ENCODE measurements at regions of chr17 and their contacts with region 1.

Region 1: DNA sequence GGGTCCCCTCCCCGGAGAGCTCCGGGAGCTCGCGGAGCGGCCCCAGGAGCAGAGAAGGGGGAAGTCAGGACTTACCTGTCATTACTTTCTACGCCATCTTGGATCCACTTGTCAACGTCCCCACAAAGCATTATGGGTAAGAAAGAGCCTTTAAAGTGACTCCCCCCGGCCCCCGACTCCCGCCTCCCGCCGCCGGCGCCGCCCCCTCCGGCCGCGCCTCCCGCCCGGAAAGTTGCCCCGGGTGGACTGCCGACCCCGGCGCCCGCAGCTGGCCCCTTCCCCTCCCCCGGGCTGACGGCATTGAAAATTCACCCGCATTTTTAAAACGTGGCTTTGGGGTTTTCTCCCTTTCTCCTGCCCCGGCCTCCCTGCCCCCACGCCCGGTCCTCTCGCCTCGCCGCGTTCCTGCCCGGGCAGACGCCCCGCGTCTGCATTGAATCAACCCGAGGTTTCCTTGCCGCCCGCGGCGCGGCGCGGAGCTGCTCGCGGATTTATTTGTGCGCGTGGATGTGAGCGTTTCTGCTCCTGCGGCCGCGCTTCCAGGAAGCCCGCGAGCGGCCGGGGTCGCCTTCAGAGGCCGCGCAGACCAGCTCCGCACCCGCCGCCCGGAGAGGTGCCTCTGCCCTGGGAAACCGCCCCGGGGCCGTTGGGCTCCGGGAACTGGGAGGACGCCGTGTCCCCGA is at the start of gene HELZ:
- DNase-seq: peak; percentile 48 to 89 (median 64)
- ATAC-seq: peak; percentile 73
- H3K4me3 ChIP-seq: peak within 1 kb of the TSS; percentile 94
- H3K4me3 Mint-ChIP-seq: peak within 1 kb of the TSS; percentile 97
- H3K27ac ChIP-seq: peak within 1 kb of the TSS; percentile 62 to 74
- H3K27ac Mint-ChIP-seq: peak within 1 kb of the TSS; percentile 89
- H3K4me1 ChIP-seq: peaks cover 36% of the 10 kb centered on the region
- H3K4me1 Mint-ChIP-seq: peaks cover 48% of the 10 kb centered on the region
- H3K27me3 ChIP-seq: no peaks in the 10 kb centered on the region
- H3K27me3 Mint-ChIP-seq: no peaks in the 10 kb centered on the region
- CTCF ChIP-seq: no peak
- total RNA-seq, gene HELZ: 94.8 to 107 TPM

Region 2: DNA sequence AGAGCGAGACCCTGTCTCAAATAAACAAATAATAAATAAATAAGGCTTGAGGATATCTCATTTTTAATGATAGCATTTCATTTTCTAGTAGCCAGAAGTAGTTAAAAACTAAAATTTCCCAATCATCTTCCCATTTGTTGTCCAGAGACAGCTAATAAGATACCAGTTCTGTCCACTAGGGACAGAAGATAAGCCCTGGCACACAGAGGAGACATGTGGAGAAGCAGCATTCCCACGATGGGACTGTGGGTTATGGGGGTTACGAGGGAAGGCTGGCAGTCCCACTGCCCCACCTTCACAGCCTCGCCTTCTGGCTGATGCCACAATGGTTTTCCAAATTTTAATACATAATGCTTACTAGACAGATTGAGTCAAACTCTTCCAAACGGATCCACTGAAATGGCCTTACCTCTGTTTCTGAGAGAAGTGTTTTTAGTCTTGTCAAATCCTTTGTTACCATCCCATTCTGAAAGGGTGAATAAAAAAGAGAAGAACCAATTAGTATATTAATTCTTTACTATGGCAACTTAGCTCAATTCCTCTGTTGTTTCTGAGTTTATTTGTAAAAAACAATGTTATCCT is 44.4 kb before region 1 on chr17:
- CTCF ChIA-PET with region 1: no interaction called
- POLR2A ChIA-PET with region 1: no interaction called
- intact Hi-C with region 1: no loop called
- DNase-seq: no peak
- ATAC-seq: no peak
- H3K4me3 ChIP-seq: no peak overlapping the region
- H3K4me3 Mint-ChIP-seq: no peak overlapping the region
- H3K27ac ChIP-seq: no peak overlapping the region
- H3K27ac Mint-ChIP-seq: no peak overlapping the region
- H3K4me1 ChIP-seq: no peaks in the 10 kb centered on the region
- H3K4me1 Mint-ChIP-seq: peaks cover 22% of the 10 kb centered on the region
- H3K27me3 ChIP-seq: no peaks in the 10 kb centered on the region
- H3K27me3 Mint-ChIP-seq: no peaks in the 10 kb centered on the region
- CTCF ChIP-seq: peak; percentile 33

Region 3: DNA sequence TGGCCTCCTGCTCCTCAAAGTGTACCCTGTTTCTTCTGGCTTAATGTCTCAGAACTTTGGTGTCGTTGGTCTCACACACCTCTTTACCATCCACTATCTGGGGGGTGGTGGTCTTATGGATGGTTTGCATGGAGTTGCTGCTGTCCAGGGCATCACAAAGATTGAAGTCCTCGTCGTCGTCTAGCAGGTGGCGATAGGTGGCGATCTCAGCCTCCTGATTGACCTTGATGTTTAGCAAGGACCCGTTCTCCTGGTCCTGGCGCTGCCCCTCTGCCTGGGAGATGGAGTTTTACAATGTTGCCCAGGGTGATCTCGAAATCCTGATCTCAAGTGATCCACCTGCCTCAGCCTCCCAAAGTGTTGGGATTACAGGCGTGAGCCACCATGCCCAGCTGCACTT is 30.9 kb after region 1 on chr17:
- CTCF ChIA-PET with region 1: no interaction called
- POLR2A ChIA-PET with region 1: no interaction called
- intact Hi-C with region 1: no loop called
- DNase-seq: no peak
- ATAC-seq: no peak
- H3K4me3 ChIP-seq: no peak overlapping the region
- H3K4me3 Mint-ChIP-seq: no peak overlapping the region
- H3K27ac ChIP-seq: no peak overlapping the region
- H3K27ac Mint-ChIP-seq: no peak overlapping the region
- H3K4me1 ChIP-seq: no peaks in the 10 kb centered on the region
- H3K4me1 Mint-ChIP-seq: no peaks in the 10 kb centered on the region
- H3K27me3 ChIP-seq: no peaks in the 10 kb centered on the region
- H3K27me3 Mint-ChIP-seq: no peaks in the 10 kb centered on the region
- CTCF ChIP-seq: no peak

Region 4: GRCh38 chr17:67359960-67360773 is 115.0 kb after region 1 on chr17:
- CTCF ChIA-PET with region 1: no interaction called
- POLR2A ChIA-PET with region 1: interaction called, 4 read pairs
- intact Hi-C with region 1: loop called in 1 of 2 experiments (anchors 5 kb)
- DNase-seq: peak in 10 of 14 experiments; percentile 34 to 84 (median 58)
- ATAC-seq: peak; percentile 96
- H3K4me3 ChIP-seq: no peak overlapping the region
- H3K4me3 Mint-ChIP-seq: peak overlapping the region; percentile 17
- H3K27ac ChIP-seq: peak overlapping the region in 1 of 2 donors; percentile 37
- H3K27ac Mint-ChIP-seq: peak overlapping the region; percentile 73
- H3K4me1 ChIP-seq: peaks cover 48% of the 10 kb centered on the region
- H3K4me1 Mint-ChIP-seq: peaks cover 55% of the 10 kb centered on the region
- H3K27me3 ChIP-seq: no peaks in the 10 kb centered on the region
- H3K27me3 Mint-ChIP-seq: no peaks in the 10 kb centered on the region
- CTCF ChIP-seq: peak; percentile 56

Region 5: DNA sequence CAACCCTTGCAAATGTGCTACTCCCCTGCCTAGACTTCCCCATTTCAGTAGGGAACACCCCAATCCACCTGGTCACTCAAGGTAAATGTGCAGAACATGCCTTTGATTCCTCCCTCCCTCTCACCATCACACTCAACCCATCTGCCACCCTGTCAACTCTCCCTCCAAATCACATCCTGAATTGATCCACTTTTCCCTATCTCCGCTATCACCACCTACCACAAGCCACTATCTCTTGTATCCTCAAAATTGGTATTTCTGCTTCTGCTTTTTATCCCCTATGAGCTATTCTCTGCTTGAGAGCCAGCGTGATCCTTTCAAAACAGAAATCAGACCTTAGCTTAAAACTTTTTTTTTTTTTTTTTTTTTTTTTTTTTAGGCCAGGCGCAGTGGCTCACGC is 467.2 kb after region 1 on chr17:
- CTCF ChIA-PET with region 1: no interaction called
- POLR2A ChIA-PET with region 1: no interaction called
- intact Hi-C with region 1: loop called in 1 of 2 experiments (anchors 5 kb)
- DNase-seq: no peak
- ATAC-seq: no peak
- H3K4me3 ChIP-seq: no peak overlapping the region
- H3K4me3 Mint-ChIP-seq: no peak overlapping the region
- H3K27ac ChIP-seq: no peak overlapping the region
- H3K27ac Mint-ChIP-seq: no peak overlapping the region
- H3K4me1 ChIP-seq: peaks cover 5% of the 10 kb centered on the region
- H3K4me1 Mint-ChIP-seq: peaks cover 9% of the 10 kb centered on the region
- H3K27me3 ChIP-seq: no peaks in the 10 kb centered on the region
- H3K27me3 Mint-ChIP-seq: peaks cover 12% of the 10 kb centered on the region
- CTCF ChIP-seq: no peak